GM13976 (cell line): ENCODE measurements at regions of chr6 and their contacts with region 1.

Region 1: DNA sequence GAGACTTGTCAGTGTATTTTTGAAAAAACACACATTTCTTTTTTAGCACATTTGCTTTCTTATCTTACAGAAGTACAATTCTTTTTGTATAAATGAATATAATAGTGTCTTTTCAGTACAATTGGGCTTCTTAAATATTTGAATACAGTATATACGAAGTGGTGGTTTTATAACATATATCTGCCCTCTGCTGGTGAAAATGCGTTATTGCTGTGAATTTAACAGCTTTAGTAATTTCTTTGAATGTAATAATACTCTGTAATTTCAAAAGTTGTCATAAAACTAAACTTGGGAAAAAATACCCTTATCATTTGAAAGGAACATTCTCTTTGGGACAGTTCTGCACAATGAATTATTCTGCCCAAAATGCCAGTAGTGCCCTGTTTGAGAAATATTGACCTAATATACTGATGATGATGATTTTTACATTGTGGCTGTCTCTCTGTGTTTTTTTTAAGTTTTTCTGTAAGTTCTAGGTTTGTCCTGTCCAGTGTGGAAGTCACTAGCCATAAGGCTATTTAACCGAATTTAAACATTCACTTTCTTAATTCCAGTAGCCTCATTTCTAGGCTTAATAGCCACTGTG is 19.0 kb downstream of the SMAP1 start:
- DNase-seq: peak; percentile 35
- CTCF ChIP-seq: peak; percentile 52

Region 2: GRCh38 chr6:70413114-70413991 is 273.3 kb before region 1 on chr6 and contains the start of gene FAM135A:
- in situ Hi-C with region 1: loop called (anchors 25 kb)
- DNase-seq: peak; percentile 97
- CTCF ChIP-seq: no peak